CD8-positive, alpha-beta T cell (primary cell): ENCODE measurements at regions of chr19 and their contacts with region 1.

Region 1: DNA sequence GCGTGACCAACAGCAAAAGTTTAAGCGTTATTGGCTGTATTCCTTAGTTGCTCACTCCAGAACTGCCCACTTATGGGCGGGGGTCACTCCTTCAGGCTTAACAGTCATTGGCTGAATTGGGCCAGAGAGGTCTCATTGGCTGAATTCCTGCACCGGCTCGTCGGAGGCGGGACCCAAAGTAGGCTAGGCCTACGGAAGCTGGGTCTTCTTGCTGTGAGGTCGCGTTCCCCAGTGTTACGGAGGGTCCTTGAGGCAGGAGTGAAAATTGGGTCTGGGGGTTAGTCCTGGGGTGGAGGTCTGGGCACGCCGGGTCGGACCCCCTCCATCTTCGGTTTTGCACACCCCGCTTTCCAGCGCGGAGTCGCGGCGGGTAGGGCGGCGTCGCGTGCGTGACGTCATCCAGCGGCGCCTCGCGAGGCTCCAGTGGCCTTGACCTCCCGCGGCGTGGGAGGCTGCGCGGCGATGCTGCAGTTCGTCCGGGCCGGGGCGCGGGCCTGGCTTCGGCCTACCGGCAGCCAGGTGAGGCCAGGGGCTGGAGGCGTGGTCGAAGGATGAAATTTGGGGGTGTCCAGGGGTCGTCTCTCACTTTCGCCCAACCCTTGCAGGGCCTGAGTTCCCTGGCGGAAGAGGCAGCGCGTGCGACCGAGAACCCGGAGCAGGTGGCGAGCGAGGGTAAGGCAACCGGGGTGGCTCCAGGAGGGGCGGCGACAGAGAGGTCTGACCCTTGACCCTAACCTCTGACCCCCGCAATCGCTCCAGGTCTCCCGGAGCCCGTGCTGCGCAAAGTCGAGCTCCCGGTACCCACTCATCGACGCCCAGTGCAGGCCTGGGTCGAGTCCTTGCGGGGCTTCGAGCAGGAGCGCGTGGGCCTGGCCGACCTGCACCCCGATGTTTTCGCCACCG is at the start of gene MRPL4:
- DNase-seq: peak; percentile 90 to 99 (median 94)
- ATAC-seq: peak; percentile 97
- H3K4me3 ChIP-seq: peak within 1 kb of the TSS; percentile 92 to 99
- H3K4me3 Mint-ChIP-seq: peak within 1 kb of the TSS; percentile 99
- H3K27ac ChIP-seq: peak within 1 kb of the TSS; percentile 68 to 80
- H3K27ac Mint-ChIP-seq: peak within 1 kb of the TSS; percentile 97
- H3K4me1 ChIP-seq: peaks cover 7% of the 10 kb centered on the region
- H3K4me1 Mint-ChIP-seq: peaks cover 24% of the 10 kb centered on the region
- H3K27me3 ChIP-seq: no peaks in the 10 kb centered on the region
- H3K27me3 Mint-ChIP-seq: no peaks in the 10 kb centered on the region
- CTCF ChIP-seq: no peak
- total RNA-seq, gene MRPL4: 39.5 to 46.0 TPM

Region 2: GRCh38 chr19:9865732-9866501 is 386.1 kb before region 1 on chr19:
- CTCF ChIA-PET with region 1: no interaction called
- POLR2A ChIA-PET with region 1: no interaction called
- intact Hi-C with region 1: no loop called
- DNase-seq: peak in 8 of 9 experiments; percentile 31 to 83 (median 63)
- ATAC-seq: peak; percentile 77
- H3K4me3 ChIP-seq: peak overlapping the region in 1 of 2 experiments; percentile 34
- H3K4me3 Mint-ChIP-seq: peak overlapping the region; percentile 76
- H3K27ac ChIP-seq: no peak overlapping the region
- H3K27ac Mint-ChIP-seq: peak overlapping the region; percentile 88
- H3K4me1 ChIP-seq: peaks cover 66% of the 10 kb centered on the region
- H3K4me1 Mint-ChIP-seq: peaks cover 58% of the 10 kb centered on the region
- H3K27me3 ChIP-seq: no peaks in the 10 kb centered on the region
- H3K27me3 Mint-ChIP-seq: no peaks in the 10 kb centered on the region
- CTCF ChIP-seq: no peak

Region 3: DNA sequence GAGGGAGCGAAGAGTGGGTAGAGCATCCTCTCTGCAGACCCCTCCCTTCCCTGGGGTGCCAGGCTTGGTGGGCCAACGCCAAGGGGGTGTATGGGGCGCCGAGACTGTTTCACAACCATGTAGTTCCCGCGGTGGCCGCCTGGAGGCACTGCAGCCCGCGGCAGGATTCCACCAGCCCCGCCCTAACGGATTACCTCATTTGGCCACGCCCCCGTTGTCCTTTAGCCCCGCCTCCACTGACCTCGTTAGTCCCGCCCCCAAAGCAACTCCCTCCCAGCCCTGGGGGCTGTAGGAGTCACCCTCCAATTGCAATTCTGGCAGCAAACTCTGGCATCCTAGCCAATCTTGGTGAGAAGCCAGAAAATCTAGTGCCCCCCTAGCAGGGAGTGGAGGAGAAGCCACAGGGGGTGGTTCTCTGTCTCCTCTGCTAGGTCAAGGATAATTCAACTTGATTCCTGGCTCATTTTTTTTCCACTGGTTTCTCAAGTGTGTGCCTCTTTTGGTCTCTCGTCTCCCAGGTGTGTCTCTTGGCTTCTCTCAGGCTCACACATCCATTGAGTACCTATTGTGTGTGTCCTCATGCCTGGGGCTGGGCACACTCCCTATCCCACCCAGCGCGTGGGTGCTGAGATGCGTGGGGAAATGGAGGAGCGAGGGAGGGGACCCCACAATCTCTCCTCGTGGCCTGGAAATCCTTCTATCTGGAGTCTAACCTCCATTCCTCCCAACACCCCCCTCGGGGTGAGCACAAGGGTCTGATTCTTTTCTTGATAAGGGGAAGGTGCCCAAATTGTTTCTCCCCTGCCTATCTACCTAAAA is 317.7 kb before region 1 on chr19:
- CTCF ChIA-PET with region 1: interaction called, 31 read pairs
- POLR2A ChIA-PET with region 1: no interaction called
- intact Hi-C with region 1: loop called (anchors 1 kb)
- DNase-seq: peak; percentile 63 to 90 (median 80)
- ATAC-seq: peak; percentile 92
- H3K4me3 ChIP-seq: no peak overlapping the region
- H3K4me3 Mint-ChIP-seq: no peak overlapping the region
- H3K27ac ChIP-seq: no peak overlapping the region
- H3K27ac Mint-ChIP-seq: no peak overlapping the region
- H3K4me1 ChIP-seq: peaks cover 21% of the 10 kb centered on the region
- H3K4me1 Mint-ChIP-seq: peaks cover 30% of the 10 kb centered on the region
- H3K27me3 ChIP-seq: peaks cover 6 to 38% of the 10 kb centered on the region in 2 experiments
- H3K27me3 Mint-ChIP-seq: peaks cover 51% of the 10 kb centered on the region
- CTCF ChIP-seq: peak; percentile 89

Region 4: GRCh38 chr19:10095948-10096621 is 156.0 kb before region 1 on chr19:
- CTCF ChIA-PET with region 1: interaction called, 10 read pairs
- POLR2A ChIA-PET with region 1: interaction called, 4 read pairs
- intact Hi-C with region 1: loop called in 1 of 2 experiments (anchors 1 kb)
- DNase-seq: peak; percentile 79 to 97 (median 90)
- ATAC-seq: peak; percentile 96
- H3K4me3 ChIP-seq: peak overlapping the region; percentile 41 to 67
- H3K4me3 Mint-ChIP-seq: peak overlapping the region; percentile 29
- H3K27ac ChIP-seq: peak overlapping the region; percentile 62 to 70
- H3K27ac Mint-ChIP-seq: peak overlapping the region; percentile 45
- H3K4me1 ChIP-seq: peaks cover 24% of the 10 kb centered on the region
- H3K4me1 Mint-ChIP-seq: peaks cover 18% of the 10 kb centered on the region
- H3K27me3 ChIP-seq: no peaks in the 10 kb centered on the region
- H3K27me3 Mint-ChIP-seq: no peaks in the 10 kb centered on the region
- CTCF ChIP-seq: no peak

Region 5: GRCh38 chr19:10142701-10143375 is 109.2 kb before region 1 on chr19:
- CTCF ChIA-PET with region 1: interaction called, 12 read pairs
- POLR2A ChIA-PET with region 1: interaction called, 6 read pairs
- intact Hi-C with region 1: loop called in 1 of 2 experiments (anchors 1 kb)
- DNase-seq: peak; percentile 19 to 86 (median 58)
- ATAC-seq: peak; percentile 94
- H3K4me3 ChIP-seq: peak overlapping the region; percentile 11 to 45
- H3K4me3 Mint-ChIP-seq: peak overlapping the region; percentile 76
- H3K27ac ChIP-seq: peak overlapping the region; percentile 80 to 94
- H3K27ac Mint-ChIP-seq: peak overlapping the region; percentile 98
- H3K4me1 ChIP-seq: peaks cover 45% of the 10 kb centered on the region
- H3K4me1 Mint-ChIP-seq: peaks cover 42% of the 10 kb centered on the region
- H3K27me3 ChIP-seq: no peaks in the 10 kb centered on the region
- H3K27me3 Mint-ChIP-seq: no peaks in the 10 kb centered on the region
- CTCF ChIP-seq: peak; percentile 29

Region 6: DNA sequence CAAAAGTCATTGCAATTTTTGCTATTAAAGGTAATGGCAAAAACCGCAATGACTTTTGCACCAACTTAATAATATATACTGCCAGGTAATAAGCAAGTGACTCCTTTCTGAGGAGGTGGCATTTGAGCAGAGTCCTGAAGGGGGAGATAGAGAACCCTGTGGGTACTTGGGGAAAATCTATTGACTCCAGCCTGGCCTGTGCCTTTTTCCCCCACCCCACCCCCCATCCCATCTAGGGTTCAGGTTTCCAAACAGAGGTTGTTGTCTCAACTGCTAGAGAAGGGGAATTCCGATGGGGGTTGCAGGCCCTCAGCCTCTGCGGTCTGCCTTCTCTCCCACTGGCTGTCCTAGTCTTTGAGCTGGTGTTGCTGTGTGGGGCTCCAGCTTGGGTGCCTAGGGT is 32.4 kb before region 1 on chr19:
- CTCF ChIA-PET with region 1: interaction called, 76 read pairs
- POLR2A ChIA-PET with region 1: interaction called, 3 read pairs
- intact Hi-C with region 1: loop called in 1 of 2 experiments (anchors 5 kb)
- DNase-seq: peak in 4 of 9 experiments; percentile 21 to 76 (median 58)
- ATAC-seq: peak; percentile 86
- H3K4me3 ChIP-seq: no peak overlapping the region
- H3K4me3 Mint-ChIP-seq: no peak overlapping the region
- H3K27ac ChIP-seq: no peak overlapping the region
- H3K27ac Mint-ChIP-seq: no peak overlapping the region
- H3K4me1 ChIP-seq: no peaks in the 10 kb centered on the region
- H3K4me1 Mint-ChIP-seq: no peaks in the 10 kb centered on the region
- H3K27me3 ChIP-seq: no peaks in the 10 kb centered on the region
- H3K27me3 Mint-ChIP-seq: no peaks in the 10 kb centered on the region
- CTCF ChIP-seq: peak; percentile 35

Region 7: DNA sequence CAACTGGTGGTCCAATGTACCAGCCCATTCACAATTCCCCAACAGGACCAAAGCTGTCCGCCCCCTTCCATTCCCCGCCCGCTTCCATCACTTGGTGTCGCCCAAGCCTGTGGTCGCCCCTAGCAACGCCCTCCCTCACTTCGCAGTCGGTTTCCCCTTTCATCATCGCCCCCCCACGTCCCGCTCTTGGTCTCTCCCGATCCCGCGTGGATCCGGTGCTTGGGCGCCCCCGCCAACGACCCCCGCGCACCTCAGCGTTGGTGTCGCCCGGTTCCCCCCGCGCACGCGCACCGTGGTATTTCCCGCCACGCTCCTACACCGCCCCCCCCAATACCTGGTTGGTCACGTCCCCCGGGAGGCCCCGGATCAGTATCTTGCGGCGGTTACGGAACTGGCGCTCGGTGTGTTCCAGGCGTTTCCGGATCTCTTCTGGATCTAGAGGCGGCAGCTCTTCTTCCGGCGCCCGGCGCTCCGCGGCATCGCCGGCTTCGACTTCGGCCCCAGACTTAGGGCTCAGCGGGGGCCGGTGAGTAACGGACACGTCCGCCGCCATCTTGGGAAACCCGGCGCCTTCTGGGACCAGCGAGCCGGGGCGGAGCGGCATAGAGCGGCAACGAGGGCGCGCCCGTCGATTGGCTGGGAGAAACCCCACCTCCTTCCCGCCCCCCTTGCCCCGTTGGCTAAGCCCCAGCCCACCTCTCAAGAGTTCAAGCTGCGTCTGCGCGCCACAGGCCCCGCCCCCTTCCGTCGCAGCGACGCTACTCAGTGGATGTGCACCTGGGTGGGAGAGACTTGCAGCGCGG is 81.1 kb after region 1 on chr19 and contains the start of gene RAVER1:
- CTCF ChIA-PET with region 1: interaction called, 3 read pairs
- POLR2A ChIA-PET with region 1: no interaction called
- intact Hi-C with region 1: loop called in 1 of 2 experiments (anchors 1 kb)
- DNase-seq: peak; percentile 94 to 99 (median 98)
- ATAC-seq: peak; percentile 96
- H3K4me3 ChIP-seq: peak within 1 kb of the TSS; percentile 93 to 97
- H3K4me3 Mint-ChIP-seq: peak within 1 kb of the TSS; percentile 95
- H3K27ac ChIP-seq: peak within 1 kb of the TSS; percentile 76 to 95
- H3K27ac Mint-ChIP-seq: peak within 1 kb of the TSS; percentile 93
- H3K4me1 ChIP-seq: peaks cover 30% of the 10 kb centered on the region
- H3K4me1 Mint-ChIP-seq: peaks cover 35% of the 10 kb centered on the region
- H3K27me3 ChIP-seq: no peaks in the 10 kb centered on the region
- H3K27me3 Mint-ChIP-seq: no peaks in the 10 kb centered on the region
- CTCF ChIP-seq: no peak
- total RNA-seq, gene RAVER1: 33.3 to 33.6 TPM